ENCODE measurements at regions of chr15 and their contacts with region 1.

Region 1: GRCh38 chr15:89075846-89076245 is 12.4 kb upstream of the ABHD2 start:
- DNase-seq: no peak
- ATAC-seq: no peak
- H3K4me3 ChIP-seq: no peak overlapping the region
- H3K27ac ChIP-seq: no peak overlapping the region
- H3K4me1 ChIP-seq: peaks cover 0 to 28% (median 0%) of the 10 kb centered on the region in 9 donors
- H3K27me3 ChIP-seq: no peaks in the 10 kb centered on the region
- CTCF ChIP-seq: no peak

Region 2: DNA sequence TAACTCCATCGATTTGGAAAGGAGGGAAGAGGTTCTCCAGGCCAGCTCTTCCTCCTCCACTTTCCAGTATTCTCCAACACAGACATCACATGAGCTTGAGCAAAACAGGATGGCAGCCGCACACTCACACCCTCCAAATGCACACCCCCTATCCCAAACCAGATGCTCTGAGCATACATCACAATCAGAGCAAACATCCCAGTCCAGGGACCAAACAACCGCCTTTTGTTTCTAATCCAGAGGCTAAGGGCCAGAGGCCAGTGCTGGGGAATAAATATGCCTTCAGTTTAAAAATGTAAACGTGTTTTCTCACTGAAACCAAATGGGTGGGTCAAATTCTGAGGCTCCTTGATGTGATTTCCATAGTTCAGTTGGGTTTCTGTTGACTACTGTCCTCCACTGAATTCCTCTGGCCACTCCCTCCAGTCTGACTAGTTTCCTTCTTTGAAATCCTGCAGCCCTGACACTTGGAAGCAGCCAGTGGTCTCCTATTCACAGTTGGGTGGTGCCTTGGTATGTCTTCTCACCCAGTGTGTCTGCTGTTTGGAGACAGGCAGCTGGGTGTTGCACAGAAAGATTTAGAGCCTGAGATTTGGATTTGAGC is 143.5 kb before region 1 on chr15:
- intact Hi-C with region 1: no loop called
- DNase-seq: peak in 1 of 2 donors; percentile 45
- ATAC-seq: peak; percentile 43 to 95 (median 89)
- H3K4me3 ChIP-seq: no peak overlapping the region
- H3K27ac ChIP-seq: peak overlapping the region; percentile 36 to 88 (median 75)
- H3K4me1 ChIP-seq: peaks cover 5 to 28% (median 24%) of the 10 kb centered on the region in 9 donors
- H3K27me3 ChIP-seq: no peaks in the 10 kb centered on the region
- CTCF ChIP-seq: no peak

Region 3: GRCh38 chr15:89164712-89165211 is 88.9 kb after region 1 on chr15:
- intact Hi-C with region 1: loop called in 1 of 10 experiments (anchors 5 kb)
- DNase-seq: peak in 1 of 2 donors; percentile 35
- ATAC-seq: peak; percentile 25 to 85 (median 62)
- H3K4me3 ChIP-seq: no peak overlapping the region
- H3K27ac ChIP-seq: peak overlapping the region in 4 of 10 donors; percentile 3 to 66 (median 45)
- H3K4me1 ChIP-seq: peaks cover 0 to 71% (median 44%) of the 10 kb centered on the region in 9 donors
- H3K27me3 ChIP-seq: no peaks in the 10 kb centered on the region
- CTCF ChIP-seq: no peak